ENCODE measurements at regions of chr2 and their contacts with region 1.

Region 1: DNA sequence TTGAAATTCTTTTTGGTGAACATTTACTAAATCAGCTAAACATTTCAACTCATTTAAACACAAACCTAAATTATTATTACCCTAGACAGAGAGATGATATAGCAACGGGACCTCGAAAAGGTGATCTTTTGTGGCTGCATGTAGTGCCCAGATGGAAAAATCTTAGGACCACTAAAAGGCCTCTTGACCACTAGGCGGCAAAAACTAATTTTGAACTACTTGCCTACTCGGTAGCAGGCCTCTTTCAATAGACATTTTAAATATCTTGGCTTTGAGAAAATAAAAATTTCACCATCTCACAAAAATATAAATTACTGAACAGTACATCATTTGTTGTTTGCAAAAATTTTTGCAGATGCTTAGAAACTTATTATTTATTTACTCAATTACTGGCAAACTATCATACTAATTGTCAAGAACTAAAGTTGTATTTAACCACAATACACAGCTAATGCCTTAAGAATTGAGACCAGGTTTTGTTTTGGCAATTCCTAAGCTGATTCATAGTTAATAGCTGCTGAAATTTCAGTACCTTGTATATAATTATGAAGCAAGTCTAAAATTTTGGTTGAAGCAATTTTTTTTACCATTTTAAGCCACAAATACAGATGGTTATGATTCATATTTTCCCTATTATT is 9.4 kb downstream of the COL3A1 start:
- DNase-seq: no peak
- H3K4me3 ChIP-seq: no peak overlapping the region
- H3K27ac ChIP-seq: no peak overlapping the region
- H3K4me1 ChIP-seq: no peaks in the 10 kb centered on the region
- H3K27me3 ChIP-seq: no peaks in the 10 kb centered on the region
- CTCF ChIP-seq: peak; percentile 36 to 39

Region 2: DNA sequence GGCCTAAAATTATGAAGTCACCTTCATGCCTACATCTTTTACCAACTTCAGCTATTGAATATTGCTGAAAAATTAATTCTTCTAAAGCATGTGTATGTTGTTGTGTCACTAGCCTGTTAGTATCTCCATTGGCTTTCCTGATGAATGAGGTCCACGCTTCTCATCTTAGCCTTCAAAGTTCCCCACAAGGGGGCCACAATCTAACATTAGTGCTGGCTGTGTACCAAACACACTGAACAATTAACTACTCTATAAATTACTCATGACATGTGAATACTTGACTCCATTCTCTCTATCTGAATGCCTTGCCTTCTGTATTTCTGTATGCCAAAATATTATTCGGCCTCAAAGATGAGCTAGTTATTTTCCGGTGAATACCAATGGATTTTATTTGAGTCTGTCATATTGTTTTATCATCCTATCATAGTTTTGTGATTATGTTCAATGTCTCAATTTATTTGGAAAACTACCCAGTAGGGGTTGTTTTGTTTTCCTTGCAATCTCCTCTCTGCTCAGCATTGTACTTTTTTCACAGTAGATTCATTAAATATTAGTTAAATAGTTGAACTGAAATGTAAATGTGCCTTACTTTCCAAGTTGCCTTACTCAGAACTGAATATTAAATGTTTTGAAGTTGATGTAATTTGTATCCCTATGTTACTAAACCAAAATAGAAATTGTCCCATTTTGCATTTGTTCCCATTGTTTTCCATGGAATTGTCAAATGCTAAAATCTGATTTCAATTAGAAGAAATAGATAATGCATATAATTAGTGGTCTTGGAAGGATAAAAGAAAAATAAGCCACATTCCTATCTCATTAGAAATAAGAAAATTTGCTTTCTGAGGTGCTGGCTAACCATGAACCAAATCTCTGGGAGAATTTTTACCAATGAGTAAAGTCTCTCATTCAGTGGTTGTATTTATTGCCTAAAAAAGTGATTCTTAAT is 217.8 kb before region 1 on chr2:
- CTCF ChIA-PET with region 1: interaction called, 4 read pairs
- dilution Hi-C with region 1: no loop called
- in situ Hi-C with region 1: no loop called
- intact Hi-C with region 1: loop called (anchors 2 kb)
- DNase-seq: peak; percentile 63
- H3K4me3 ChIP-seq: no peak overlapping the region
- H3K27ac ChIP-seq: no peak overlapping the region
- H3K4me1 ChIP-seq: no peaks in the 10 kb centered on the region
- H3K27me3 ChIP-seq: peaks cover 2% of the 10 kb centered on the region
- CTCF ChIP-seq: peak; percentile 42 to 48

Region 3: DNA sequence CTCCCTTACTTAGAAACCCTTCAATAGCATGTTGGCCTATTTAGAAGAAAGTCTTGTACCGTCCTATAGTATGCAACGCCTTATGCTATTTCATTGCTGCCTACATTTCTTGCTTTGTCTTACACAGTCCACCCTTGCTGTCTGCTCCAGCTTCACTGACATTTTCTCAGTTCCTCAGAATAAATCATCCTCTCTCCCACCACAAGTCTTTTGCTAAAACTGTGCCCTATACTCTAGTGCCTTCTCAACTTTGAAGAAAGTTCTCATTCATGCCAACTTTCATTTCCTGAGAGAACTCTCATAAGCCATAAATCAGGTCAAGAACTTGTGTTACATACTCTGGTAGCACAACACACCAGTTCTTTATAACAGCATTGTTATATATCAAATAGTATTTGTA is 63.7 kb before region 1 on chr2:
- CTCF ChIA-PET with region 1: no interaction called
- dilution Hi-C with region 1: no loop called
- in situ Hi-C with region 1: no loop called
- intact Hi-C with region 1: no loop called
- DNase-seq: no peak
- H3K4me3 ChIP-seq: no peak overlapping the region
- H3K27ac ChIP-seq: no peak overlapping the region
- H3K4me1 ChIP-seq: no peaks in the 10 kb centered on the region
- H3K27me3 ChIP-seq: no peaks in the 10 kb centered on the region
- CTCF ChIP-seq: no peak

Measured in mammary epithelial cell (primary cell).